ENCODE measurements at regions of chr11 and their contacts with region 1.

Region 1: GRCh38 chr11:125123947-125124617 is 12.7 kb upstream of the TMEM218 start:
- DNase-seq: no peak
- ATAC-seq: peak; percentile 71
- H3K4me3 Mint-ChIP-seq: peak overlapping the region; percentile 26
- H3K27ac Mint-ChIP-seq: no peak overlapping the region
- H3K4me1 Mint-ChIP-seq: peaks cover 14% of the 10 kb centered on the region
- H3K27me3 Mint-ChIP-seq: peaks cover 32% of the 10 kb centered on the region
- CTCF ChIP-seq: no peak

Region 2: GRCh38 chr11:125091247-125091876 is 32.7 kb before region 1 on chr11:
- CTCF ChIA-PET with region 1: interaction called, 17 read pairs
- POLR2A ChIA-PET with region 1: no interaction called
- intact Hi-C with region 1: no loop called
- DNase-seq: no peak
- ATAC-seq: peak; percentile 37
- H3K4me3 Mint-ChIP-seq: no peak overlapping the region
- H3K27ac Mint-ChIP-seq: no peak overlapping the region
- H3K4me1 Mint-ChIP-seq: peaks cover 2% of the 10 kb centered on the region
- H3K27me3 Mint-ChIP-seq: no peaks in the 10 kb centered on the region
- CTCF ChIP-seq: no peak